CD4-positive, alpha-beta memory T cell (primary cell): ENCODE measurements at regions of chr6 and their contacts with region 1.

Region 1: DNA sequence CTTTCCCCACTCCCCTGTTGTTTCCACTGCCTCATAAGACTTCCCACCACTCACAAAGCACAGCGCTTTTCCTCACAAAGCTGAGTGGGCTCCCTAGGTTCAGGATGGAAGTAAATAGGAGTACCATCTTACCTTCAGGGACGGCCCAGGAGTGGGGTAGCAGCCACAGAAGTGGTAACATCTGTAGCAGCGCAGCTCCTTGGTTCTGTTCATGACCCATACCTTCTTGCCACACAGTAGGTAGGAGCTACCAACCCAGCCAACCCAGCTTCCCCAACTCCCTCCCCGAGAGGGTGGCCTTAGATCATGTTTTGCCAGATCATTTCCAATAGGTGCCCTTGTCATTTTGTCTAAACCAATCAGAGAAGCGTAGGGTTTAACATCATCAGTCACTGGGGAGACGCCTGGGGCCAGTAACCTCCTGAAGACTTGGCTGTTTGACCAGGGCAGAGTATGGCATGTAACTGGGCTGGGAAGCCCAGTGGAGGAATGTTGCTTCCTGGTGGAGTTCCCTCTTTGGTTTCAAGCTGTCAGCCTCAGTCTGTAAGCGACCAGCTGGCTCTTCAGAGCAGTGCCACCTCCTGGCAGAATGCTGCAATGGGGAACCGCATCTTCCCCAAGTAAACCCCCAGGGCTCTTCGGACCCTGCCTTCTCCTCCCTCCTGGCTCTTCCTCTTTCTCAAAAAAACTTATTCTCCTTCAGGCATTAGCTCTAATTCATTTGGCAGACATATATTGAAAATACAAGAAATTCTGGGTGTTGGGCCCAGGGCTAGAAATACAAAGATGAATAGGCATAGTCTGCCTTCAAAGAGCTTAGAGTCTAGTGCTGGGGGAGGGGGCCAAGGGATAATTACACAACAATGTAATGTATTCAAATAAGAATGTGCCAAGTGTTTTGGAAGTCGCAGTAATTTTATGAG is at the start of gene HLA-DMA:
- DNase-seq: peak; percentile 76 to 90 (median 85)
- H3K4me3 ChIP-seq: peak within 1 kb of the TSS; percentile 7 to 19
- H3K4me3 Mint-ChIP-seq: peak within 1 kb of the TSS; percentile 18 to 80 (median 68)
- H3K27ac ChIP-seq: peak within 1 kb of the TSS; percentile 31
- H3K27ac Mint-ChIP-seq: peak within 1 kb of the TSS; percentile 49 to 89 (median 82)
- H3K4me1 ChIP-seq: peaks cover 27% of the 10 kb centered on the region
- H3K4me1 Mint-ChIP-seq: peaks cover 24 to 44% (median 34%) of the 10 kb centered on the region in 4 donors
- H3K27me3 ChIP-seq: no peaks in the 10 kb centered on the region
- H3K27me3 Mint-ChIP-seq: no peaks in the 10 kb centered on the region
- total RNA-seq, gene HLA-DMA: 8.5 to 10.2 TPM

Region 2: DNA sequence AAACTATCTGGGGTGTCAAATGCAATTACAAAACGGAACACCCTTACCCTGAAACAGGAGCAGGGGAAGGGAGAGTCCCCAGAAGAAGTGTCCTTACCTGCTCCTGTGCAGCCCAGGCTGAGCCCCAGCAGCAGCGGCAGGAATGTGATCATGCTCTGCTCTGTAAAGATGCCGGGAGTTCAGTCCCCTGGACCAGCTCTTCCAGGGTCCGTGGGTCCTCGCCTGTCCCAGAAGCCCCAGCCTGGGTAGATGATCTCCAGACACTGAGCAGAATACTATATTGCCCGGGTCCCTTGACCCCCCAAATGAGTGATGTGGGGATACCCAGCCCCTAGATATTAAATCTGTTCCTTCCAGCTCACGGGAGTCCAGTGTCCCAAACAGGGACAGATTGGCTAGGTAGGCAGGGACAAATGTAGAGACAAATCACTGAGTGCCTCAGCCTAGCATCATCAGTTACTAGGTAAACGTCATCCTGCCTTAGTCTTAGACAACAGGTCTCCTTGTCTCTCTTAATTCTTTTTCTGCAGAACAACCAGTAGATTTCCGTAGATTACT is 12.3 kb before region 1 on chr6 and contains the start of gene HLA-DMB:
- CTCF ChIA-PET with region 1: interaction called, 567 read pairs
- POLR2A ChIA-PET with region 1: interaction called, 84 read pairs
- intact Hi-C with region 1: loop called (anchors 1 kb)
- DNase-seq: peak; percentile 68 to 82 (median 70)
- H3K4me3 ChIP-seq: peak within 1 kb of the TSS; percentile 57 to 73
- H3K4me3 Mint-ChIP-seq: peak within 1 kb of the TSS; percentile 89 to 97 (median 92)
- H3K27ac ChIP-seq: peak within 1 kb of the TSS; percentile 68
- H3K27ac Mint-ChIP-seq: peak within 1 kb of the TSS; percentile 90 to 99 (median 94)
- H3K4me1 ChIP-seq: peaks cover 57% of the 10 kb centered on the region
- H3K4me1 Mint-ChIP-seq: peaks cover 46 to 60% (median 53%) of the 10 kb centered on the region in 4 donors
- H3K27me3 ChIP-seq: no peaks in the 10 kb centered on the region
- H3K27me3 Mint-ChIP-seq: no peaks in the 10 kb centered on the region
- total RNA-seq, gene HLA-DMB: 7.9 to 8.1 TPM

Region 3: GRCh38 chr6:33935439-33936080 is 982.5 kb after region 1 on chr6:
- CTCF ChIA-PET with region 1: no interaction called
- POLR2A ChIA-PET with region 1: no interaction called
- intact Hi-C with region 1: no loop called
- DNase-seq: no peak
- H3K4me3 ChIP-seq: no peak overlapping the region
- H3K4me3 Mint-ChIP-seq: no peak overlapping the region
- H3K27ac ChIP-seq: no peak overlapping the region
- H3K27ac Mint-ChIP-seq: no peak overlapping the region
- H3K4me1 ChIP-seq: no peaks in the 10 kb centered on the region
- H3K4me1 Mint-ChIP-seq: peaks cover 0 to 4% (median 0%) of the 10 kb centered on the region in 4 donors
- H3K27me3 ChIP-seq: no peaks in the 10 kb centered on the region
- H3K27me3 Mint-ChIP-seq: peaks cover 0 to 2% of the 10 kb centered on the region in 2 donors